ENCODE measurements at regions of chr19 and their contacts with region 1.

Region 1: GRCh38 chr19:6730153-6730825 is 7.1 kb downstream of the GPR108 start:
- DNase-seq: no peak
- ATAC-seq: peak in 6 of 8 donors; percentile 26 to 48 (median 32)
- H3K4me3 ChIP-seq: no peak overlapping the region
- H3K27ac ChIP-seq: no peak overlapping the region
- H3K4me1 ChIP-seq: peaks cover 0 to 24% (median 0%) of the 10 kb centered on the region in 9 donors
- H3K27me3 ChIP-seq: peaks cover 0 to 11% (median 0%) of the 10 kb centered on the region in 7 donors
- CTCF ChIP-seq: no peak

Region 2: GRCh38 chr19:6761053-6761676 is 30.9 kb after region 1 on chr19:
- intact Hi-C with region 1: loop called in 1 of 10 experiments (anchors 1 kb)
- DNase-seq: no peak
- ATAC-seq: no peak
- H3K4me3 ChIP-seq: no peak overlapping the region
- H3K27ac ChIP-seq: no peak overlapping the region
- H3K4me1 ChIP-seq: peaks cover 0 to 5% (median 3%) of the 10 kb centered on the region in 9 donors
- H3K27me3 ChIP-seq: peaks cover 0 to 30% (median 11%) of the 10 kb centered on the region in 7 donors
- CTCF ChIP-seq: no peak

Region 3: DNA sequence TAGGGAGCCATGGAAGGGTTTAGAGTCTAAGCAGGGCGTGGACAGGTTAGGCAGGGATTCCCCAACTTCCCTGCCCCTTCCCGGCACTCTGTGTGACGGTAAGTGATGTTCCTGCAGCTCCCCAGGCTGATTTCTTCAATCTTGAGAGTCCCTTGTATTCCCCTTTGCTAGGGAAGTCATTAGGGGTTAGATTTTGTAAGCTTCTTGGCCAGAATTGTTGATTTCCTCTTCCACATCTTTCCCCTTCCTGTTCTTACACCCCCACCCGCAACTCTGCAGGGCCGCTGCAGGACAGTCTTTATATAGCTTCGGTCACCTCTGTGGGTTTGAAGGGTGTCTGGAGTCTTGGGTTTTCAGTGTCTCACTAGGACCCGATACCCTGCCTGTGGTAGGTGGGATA is 146.5 kb after region 1 on chr19:
- intact Hi-C with region 1: no loop called
- DNase-seq: no peak
- ATAC-seq: no peak
- H3K4me3 ChIP-seq: no peak overlapping the region
- H3K27ac ChIP-seq: peak overlapping the region in 1 of 10 donors; percentile 56
- H3K4me1 ChIP-seq: peaks cover 0 to 10% (median 0%) of the 10 kb centered on the region in 9 donors
- H3K27me3 ChIP-seq: peaks cover 0 to 46% (median 5%) of the 10 kb centered on the region in 7 donors
- CTCF ChIP-seq: no peak